SK-N-SH (cell line): ENCODE measurements at regions of chr17 and their contacts with region 1.

Region 1: DNA sequence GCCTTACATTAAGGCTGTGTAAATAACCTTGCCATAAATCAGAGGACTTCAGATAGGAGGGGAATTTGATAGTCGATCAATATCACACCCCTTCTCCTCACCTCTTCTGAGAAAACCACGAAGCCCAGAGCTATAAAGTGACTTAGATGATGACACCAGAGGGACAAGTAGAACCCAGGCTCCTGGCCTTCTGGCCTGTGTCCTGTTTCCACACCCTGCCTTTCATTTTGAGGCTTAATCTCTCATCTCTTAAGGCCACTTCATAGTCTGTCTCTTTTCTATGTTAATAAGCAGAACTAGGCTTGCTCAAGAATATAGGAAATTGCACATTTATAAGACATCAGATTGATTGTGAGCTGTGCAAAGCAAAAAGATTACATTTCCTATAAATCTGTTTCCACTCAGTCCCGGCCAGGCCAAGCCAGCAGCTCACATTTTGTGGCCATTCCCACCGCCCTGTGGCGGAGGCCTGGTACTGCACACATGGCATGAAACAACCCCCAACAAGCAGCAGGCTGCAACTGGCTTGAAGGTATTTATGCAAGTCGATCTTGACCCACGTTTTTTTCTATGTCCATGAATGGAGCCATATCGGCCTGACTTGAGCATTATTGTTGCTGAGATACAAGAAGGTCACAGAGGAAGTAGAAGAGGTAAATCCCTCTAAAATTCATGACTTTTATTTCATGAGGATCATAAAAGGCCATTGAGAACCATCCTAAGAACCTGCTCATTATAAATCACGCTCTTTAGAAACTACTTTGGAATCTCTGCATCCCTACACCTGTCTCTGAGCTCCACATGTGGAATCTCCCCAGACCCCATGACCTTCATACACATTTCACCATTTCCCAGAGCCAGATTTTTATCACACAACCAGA is 93.7 kb downstream of the PMP22 start:
- DNase-seq: peak; percentile 72
- H3K4me3 ChIP-seq: 0 out of 4 replicates have a peak overlapping the region, but pooled peaks of 1 of the 2 experiments have one; percentile 9
- H3K27ac ChIP-seq: no peak overlapping the region
- H3K4me1 ChIP-seq: no peaks in the 10 kb centered on the region; a peak in 2 of 4 replicates
- H3K27me3 ChIP-seq: no peaks in the 10 kb centered on the region
- CTCF ChIP-seq: peak; percentile 77
- EP300 ChIP-seq: no peak
- RAD21 ChIP-seq: peak; percentile 86

Region 2: DNA sequence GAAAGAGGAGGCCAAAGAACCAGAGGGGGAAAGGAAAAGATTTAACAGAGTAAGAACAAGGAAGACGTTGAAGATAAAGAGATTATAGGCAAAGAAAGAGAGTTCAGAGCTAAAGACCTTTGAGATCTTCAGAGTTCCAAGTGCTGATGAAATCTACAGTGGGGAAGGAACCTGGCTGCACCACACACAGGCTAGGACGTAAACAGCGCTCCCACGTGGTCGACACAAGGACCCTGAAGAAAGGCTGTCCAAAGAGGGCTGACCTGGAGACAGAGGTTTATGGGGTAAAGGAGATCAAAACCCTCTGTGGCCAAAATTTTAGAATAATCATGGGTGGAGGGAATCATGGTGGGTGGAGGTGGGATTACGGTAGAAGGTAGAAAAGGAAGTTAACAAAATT is 27.9 kb before region 1 on chr17:
- CTCF ChIA-PET with region 1: no interaction called
- POLR2A ChIA-PET with region 1: no interaction called
- DNase-seq: no peak
- H3K4me3 ChIP-seq: no peak overlapping the region
- H3K27ac ChIP-seq: no peak overlapping the region
- H3K4me1 ChIP-seq: no peaks in the 10 kb centered on the region
- H3K27me3 ChIP-seq: no peaks in the 10 kb centered on the region
- CTCF ChIP-seq: no peak
- EP300 ChIP-seq: no peak
- RAD21 ChIP-seq: no peak

Region 3: GRCh38 chr17:15157051-15157450 is 14.4 kb before region 1 on chr17:
- CTCF ChIA-PET with region 1: interaction called, 27 read pairs
- POLR2A ChIA-PET with region 1: interaction called, 3 read pairs
- DNase-seq: no peak
- H3K4me3 ChIP-seq: no peak overlapping the region
- H3K27ac ChIP-seq: no peak overlapping the region
- H3K4me1 ChIP-seq: no peaks in the 10 kb centered on the region
- H3K27me3 ChIP-seq: peaks cover 15% of the 10 kb centered on the region; the same call in 1 of the 2 replicates
- CTCF ChIP-seq: no peak
- EP300 ChIP-seq: no peak
- RAD21 ChIP-seq: no peak

Region 4: GRCh38 chr17:15185625-15185991 is 14.2 kb after region 1 on chr17:
- CTCF ChIA-PET with region 1: interaction called, 10 read pairs
- POLR2A ChIA-PET with region 1: no interaction called
- DNase-seq: no peak
- H3K4me3 ChIP-seq: no peak overlapping the region
- H3K27ac ChIP-seq: no peak overlapping the region
- H3K4me1 ChIP-seq: no peaks in the 10 kb centered on the region; a peak in 1 of 4 replicates
- H3K27me3 ChIP-seq: no peaks in the 10 kb centered on the region; the same call in 1 of the 2 replicates
- CTCF ChIP-seq: no peak
- EP300 ChIP-seq: no peak
- RAD21 ChIP-seq: no peak